Naive thymus-derived CD8-positive, alpha-beta T cell (primary cell): ENCODE measurements at regions of chr19 and their contacts with region 1.

Region 1: DNA sequence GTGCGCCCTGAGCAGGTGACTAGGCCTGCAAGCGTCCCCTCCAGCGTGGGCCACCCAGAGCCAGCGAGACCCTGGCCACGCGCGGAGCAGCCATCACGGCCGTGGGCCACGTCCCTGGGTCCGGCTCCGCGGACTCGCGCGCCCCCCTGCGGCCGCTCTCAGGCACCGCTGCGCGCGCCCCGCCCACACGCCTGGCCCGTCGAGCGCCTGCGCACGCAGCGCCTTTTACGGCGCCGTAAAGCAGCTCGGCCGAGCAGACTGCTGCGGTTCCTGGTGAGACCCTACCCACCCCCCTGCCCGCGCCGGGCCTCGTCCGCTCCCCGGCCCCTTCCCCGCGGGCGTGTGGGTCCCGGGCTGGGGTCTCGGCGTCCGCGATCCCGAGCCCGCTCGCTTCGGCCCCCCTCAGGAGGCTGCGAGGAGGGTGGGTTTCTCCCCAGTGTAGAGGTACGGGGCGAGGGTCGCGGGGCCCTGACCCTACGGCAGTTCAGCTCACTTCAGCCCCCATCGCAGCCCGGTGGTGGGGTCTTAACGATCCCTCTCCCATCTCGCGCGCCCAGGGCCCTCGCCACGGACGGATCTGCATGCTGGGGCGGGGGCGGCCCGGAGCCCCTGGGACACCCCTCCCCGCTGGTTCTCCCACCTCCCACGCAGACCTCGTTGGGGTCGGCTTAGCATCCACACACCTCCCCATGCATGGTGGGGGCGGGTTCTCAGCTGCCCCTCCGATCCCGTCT is at the start of gene TRAPPC5:
- DNase-seq: peak; percentile 74 to 94 (median 86)
- ATAC-seq: peak; percentile 55 to 63
- H3K4me3 Mint-ChIP-seq: peak within 1 kb of the TSS; percentile 89 to 98 (median 90)
- H3K27ac Mint-ChIP-seq: peak within 1 kb of the TSS; percentile 82 to 97 (median 92)
- H3K4me1 Mint-ChIP-seq: peaks cover 23 to 60% (median 58%) of the 10 kb centered on the region in 4 donors
- H3K27me3 Mint-ChIP-seq: peaks cover 5 to 27% (median 16%) of the 10 kb centered on the region in 5 donors
- polyA plus RNA-seq, gene TRAPPC5: 154 to 208 (median 170) TPM

Region 2: DNA sequence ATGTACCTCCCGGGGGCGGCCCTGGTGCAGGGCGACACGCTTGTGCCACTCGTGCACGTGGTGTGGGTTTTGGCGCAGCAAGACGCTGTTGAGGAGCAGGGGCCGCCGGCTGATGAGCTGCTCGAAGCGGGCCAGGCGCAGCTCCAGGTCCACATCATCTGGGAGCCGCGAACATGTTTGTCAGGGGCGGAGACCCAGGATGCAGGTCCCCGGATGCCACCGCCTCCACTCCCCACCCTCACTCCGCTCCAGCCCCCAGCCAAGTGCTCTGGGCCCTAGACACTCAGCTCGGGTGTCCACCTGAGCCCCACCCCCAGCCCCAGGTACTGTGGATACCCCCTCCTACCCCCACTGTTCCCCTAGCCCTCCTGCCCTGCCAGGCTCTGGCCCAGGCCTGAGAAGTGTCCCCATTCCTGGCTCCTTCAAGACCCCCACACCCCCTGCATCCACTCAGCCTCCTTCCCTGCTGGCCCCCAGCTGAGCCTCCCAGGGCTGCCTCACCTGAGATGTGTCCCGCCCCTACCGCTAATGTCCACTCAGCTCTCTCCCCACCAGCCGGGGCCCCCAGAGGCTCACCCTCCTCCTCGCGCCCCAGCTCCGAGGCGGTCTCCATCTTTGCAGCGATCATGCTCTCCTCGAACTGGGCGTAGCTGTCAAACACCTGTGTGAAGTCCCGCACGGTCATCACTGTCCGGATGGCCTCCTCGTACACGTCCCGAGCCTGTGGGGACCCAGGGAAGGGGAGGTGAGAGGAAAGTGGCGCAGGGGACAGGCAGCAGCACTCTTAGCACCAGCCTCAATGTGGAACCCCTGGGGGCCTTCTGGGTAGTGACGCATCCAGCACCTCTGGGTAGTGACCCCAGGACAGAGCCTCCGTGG is 56.8 kb before region 1 on chr19:
- POLR2A ChIA-PET with region 1: no interaction called
- DNase-seq: no peak
- ATAC-seq: no peak
- H3K4me3 Mint-ChIP-seq: no peak overlapping the region
- H3K27ac Mint-ChIP-seq: peak overlapping the region in 1 of 10 donors; percentile 34
- H3K4me1 Mint-ChIP-seq: peaks cover 13 to 21% (median 15%) of the 10 kb centered on the region in 4 donors
- H3K27me3 Mint-ChIP-seq: no peaks in the 10 kb centered on the region

Region 3: GRCh38 chr19:7652061-7652641 is 28.6 kb before region 1 on chr19:
- POLR2A ChIA-PET with region 1: interaction called, 11 read pairs
- DNase-seq: peak; percentile 77 to 91 (median 87)
- ATAC-seq: peak; percentile 93 to 94
- H3K4me3 Mint-ChIP-seq: peak overlapping the region; percentile 70 to 84 (median 79)
- H3K27ac Mint-ChIP-seq: peak overlapping the region; percentile 20 to 86 (median 77)
- H3K4me1 Mint-ChIP-seq: peaks cover 7 to 21% (median 14%) of the 10 kb centered on the region in 4 donors
- H3K27me3 Mint-ChIP-seq: peaks cover 0 to 2% (median 0%) of the 10 kb centered on the region in 5 donors

Region 4: GRCh38 chr19:7698583-7698982 is 17.8 kb after region 1 on chr19:
- POLR2A ChIA-PET with region 1: interaction called, 11 read pairs
- DNase-seq: no peak
- ATAC-seq: no peak
- H3K4me3 Mint-ChIP-seq: no peak overlapping the region
- H3K27ac Mint-ChIP-seq: peak overlapping the region in 1 of 10 donors; percentile 65
- H3K4me1 Mint-ChIP-seq: peaks cover 15 to 61% (median 33%) of the 10 kb centered on the region in 4 donors
- H3K27me3 Mint-ChIP-seq: peaks cover 0 to 6% (median 0%) of the 10 kb centered on the region in 5 donors

Region 5: GRCh38 chr19:7705387-7706187 is 24.8 kb after region 1 on chr19:
- POLR2A ChIA-PET with region 1: interaction called, 29 read pairs
- DNase-seq: peak; percentile 48 to 90 (median 77)
- ATAC-seq: peak; percentile 95 to 99
- H3K4me3 Mint-ChIP-seq: peak overlapping the region; percentile 74 to 91 (median 80)
- H3K27ac Mint-ChIP-seq: peak overlapping the region; percentile 96 to 99 (median 98)
- H3K4me1 Mint-ChIP-seq: peaks cover 28 to 73% (median 70%) of the 10 kb centered on the region in 4 donors
- H3K27me3 Mint-ChIP-seq: no peaks in the 10 kb centered on the region

Region 6: GRCh38 chr19:7725791-7726190 is 45.0 kb after region 1 on chr19:
- POLR2A ChIA-PET with region 1: no interaction called
- DNase-seq: no peak
- ATAC-seq: no peak
- H3K4me3 Mint-ChIP-seq: no peak overlapping the region
- H3K27ac Mint-ChIP-seq: no peak overlapping the region
- H3K4me1 Mint-ChIP-seq: peaks cover 6 to 28% (median 22%) of the 10 kb centered on the region in 4 donors
- H3K27me3 Mint-ChIP-seq: peaks cover 19 to 42% (median 32%) of the 10 kb centered on the region in 5 donors

Region 7: DNA sequence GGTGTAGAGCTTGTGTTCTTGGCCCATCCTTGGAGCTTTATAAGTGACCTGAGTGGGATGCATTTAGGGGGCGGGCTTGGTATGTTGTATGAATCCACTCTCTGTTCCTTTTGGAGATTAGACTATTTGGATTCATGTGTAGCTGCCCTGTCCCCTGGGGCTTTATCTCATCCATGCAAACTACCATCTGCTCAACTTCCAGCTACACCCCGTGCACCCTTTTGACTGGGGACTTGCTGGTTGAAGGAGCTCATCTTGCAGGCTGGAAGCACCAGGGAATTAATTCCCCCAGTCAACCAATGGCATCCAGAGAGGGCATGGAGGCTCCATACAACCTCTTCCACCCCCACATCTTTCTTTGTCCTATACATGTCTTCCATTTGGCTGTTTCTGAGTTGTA is 88.4 kb after region 1 on chr19:
- POLR2A ChIA-PET with region 1: no interaction called
- DNase-seq: no peak
- ATAC-seq: no peak
- H3K4me3 Mint-ChIP-seq: no peak overlapping the region
- H3K27ac Mint-ChIP-seq: no peak overlapping the region
- H3K4me1 Mint-ChIP-seq: peaks cover 9 to 23% (median 16%) of the 10 kb centered on the region in 4 donors
- H3K27me3 Mint-ChIP-seq: peaks cover 0 to 6% (median 0%) of the 10 kb centered on the region in 5 donors

Region 8: DNA sequence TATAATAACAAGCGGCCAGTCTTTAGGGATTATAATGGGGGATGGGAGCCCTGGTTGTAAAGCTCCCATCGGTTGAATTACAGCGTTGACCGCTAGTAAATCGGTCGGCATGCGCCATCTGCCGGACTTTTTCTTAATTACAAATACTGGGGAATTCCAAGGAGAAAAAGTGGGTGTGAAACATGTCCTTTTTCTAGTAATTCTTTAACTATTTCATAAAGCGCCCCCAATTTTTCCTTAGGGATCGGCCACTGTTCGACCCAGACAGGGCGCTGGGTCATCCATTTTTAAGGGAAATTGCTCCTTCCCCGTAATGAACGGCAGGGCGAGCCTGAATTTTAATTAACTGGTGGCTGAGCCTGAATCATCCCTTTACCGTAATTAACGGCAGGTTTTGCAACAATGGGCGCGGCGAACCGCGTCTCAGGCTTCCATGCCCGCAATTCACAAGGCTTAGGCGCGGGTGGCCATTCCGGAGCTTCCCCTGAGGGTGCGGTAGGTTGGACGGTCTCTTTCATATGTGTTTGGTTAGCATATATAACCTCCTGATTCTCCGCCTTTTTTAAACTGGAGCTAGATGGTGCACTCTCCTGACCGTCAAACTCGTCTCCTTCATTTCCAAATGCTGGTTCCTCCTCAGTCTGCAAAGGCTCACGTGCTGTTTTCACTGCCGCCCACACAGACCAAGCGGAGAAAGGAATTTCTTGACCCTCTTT is 119.0 kb after region 1 on chr19:
- POLR2A ChIA-PET with region 1: interaction called, 14 read pairs
- DNase-seq: peak; percentile 19 to 71 (median 46)
- ATAC-seq: peak in 1 of 2 donors; percentile 52
- H3K4me3 Mint-ChIP-seq: peak overlapping the region in 1 of 10 donors; percentile 32
- H3K27ac Mint-ChIP-seq: no peak overlapping the region
- H3K4me1 Mint-ChIP-seq: peaks cover 0 to 5% (median 1%) of the 10 kb centered on the region in 4 donors
- H3K27me3 Mint-ChIP-seq: peaks cover 9 to 21% (median 12%) of the 10 kb centered on the region in 5 donors